Head of caudate nucleus (tissue), 42 donors: ENCODE measurements at regions of chr2 and their contacts with region 1.

Region 1: GRCh38 chr2:79832511-79833234 is 319.8 kb downstream of the CTNNA2 start:
- DNase-seq: peak in 30 of 42 donors; percentile 6 to 80 (median 40)

Region 2: GRCh38 chr2:79529643-79530042 is 303.0 kb before region 1 on chr2:
- intact Hi-C with region 1: loop called (anchors 10 kb)
- DNase-seq: no peak

Region 3: DNA sequence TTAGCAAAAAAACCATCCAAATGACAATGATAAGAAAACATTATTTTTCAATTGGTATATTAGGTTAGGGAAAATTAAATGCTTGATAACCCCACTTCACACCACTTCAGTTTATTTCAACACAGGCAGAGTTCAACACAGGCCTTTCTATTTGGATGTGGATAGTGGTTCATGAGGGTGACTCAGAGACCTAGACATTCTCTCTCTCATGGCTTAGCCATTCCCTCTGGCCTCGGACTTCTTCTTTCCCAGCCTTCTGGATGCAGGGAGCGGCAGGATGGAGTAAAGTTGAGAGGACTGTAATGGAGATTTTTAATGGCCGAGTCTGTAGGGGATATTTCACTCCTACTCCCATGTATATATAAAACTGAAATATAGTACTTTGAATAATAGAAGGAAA is 210.2 kb before region 1 on chr2:
- intact Hi-C with region 1: no loop called
- DNase-seq: no peak

Region 4: DNA sequence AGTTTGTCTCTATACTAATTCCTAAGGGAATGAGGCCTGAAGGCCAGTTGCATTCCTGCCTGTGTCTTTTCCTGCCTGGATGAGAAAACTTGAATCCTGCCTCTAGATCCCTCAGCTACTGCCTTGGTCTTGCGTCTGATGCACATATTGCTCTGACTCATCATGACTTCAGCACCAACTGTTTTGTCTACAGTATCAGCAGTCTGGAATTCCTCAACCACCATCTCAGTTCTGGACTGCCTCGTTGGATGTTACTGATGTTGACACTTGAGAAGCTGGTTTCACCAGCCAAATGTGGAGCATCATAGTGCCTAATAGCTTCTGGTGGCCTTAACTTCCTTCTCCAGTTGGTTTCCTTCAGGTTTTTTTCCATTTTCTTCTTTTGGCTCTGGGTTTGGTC is 108.8 kb before region 1 on chr2:
- intact Hi-C with region 1: no loop called
- DNase-seq: no peak

Region 5: DNA sequence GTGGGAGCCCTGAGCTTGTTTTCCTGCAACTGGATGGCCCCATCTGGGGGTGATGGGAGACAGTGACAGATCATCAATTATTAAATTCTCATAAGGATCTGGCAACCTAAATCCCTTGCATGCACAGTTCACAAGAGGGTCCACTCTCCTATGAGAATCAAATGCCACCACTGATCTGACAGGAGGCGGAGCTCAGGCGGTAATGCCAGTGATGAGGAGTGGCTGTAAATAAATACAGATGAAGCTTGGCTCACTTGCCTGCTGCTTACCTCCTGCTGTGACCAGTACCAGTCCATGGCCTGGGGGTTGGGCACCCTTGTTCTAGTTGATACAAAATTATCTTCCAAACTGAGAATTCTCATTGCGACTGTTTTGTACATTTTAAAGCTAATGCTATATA is 61.2 kb before region 1 on chr2:
- intact Hi-C with region 1: no loop called
- DNase-seq: peak in 5 of 42 donors; percentile 6 to 41 (median 27)